Gastrocnemius medialis (tissue), 4 donors: ENCODE measurements at regions of chr11 and their contacts with region 1.

Region 1: GRCh38 chr11:72772978-72773690 is 20.7 kb downstream of the STARD10 start:
- DNase-seq: peak; percentile 59 to 78
- ATAC-seq: peak; percentile 96 to 98
- H3K4me3 ChIP-seq: no peak overlapping the region
- H3K27ac ChIP-seq: peak overlapping the region; percentile 66 to 80 (median 76)
- H3K4me1 ChIP-seq: peaks cover 24 to 26% of the 10 kb centered on the region in 2 donors
- H3K27me3 ChIP-seq: no peaks in the 10 kb centered on the region
- CTCF ChIP-seq: no peak
- POLR2A ChIP-seq: no peak

Region 2: DNA sequence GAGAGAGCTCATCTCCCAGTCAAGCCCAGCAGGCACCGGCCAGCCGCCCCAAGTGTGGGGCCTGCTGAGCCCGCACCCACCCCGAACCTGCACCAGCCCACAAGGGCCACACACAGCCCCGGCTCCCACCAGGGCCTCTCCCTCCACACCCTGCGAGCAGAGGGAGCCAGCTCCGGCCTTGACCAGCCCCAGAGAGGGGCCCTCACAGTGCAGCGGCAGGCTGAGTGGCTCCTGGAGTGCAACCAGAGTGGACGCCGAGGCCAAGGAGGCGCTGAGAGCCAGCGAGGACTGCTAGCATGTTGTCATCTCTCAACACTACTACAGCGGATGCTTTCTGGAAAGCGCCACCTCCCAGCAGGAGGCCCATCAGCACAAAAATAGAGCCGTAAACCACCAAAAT is 929.3 kb before region 1 on chr11:
- in situ Hi-C with region 1: no loop called
- intact Hi-C with region 1: no loop called
- DNase-seq: no peak
- ATAC-seq: no peak
- H3K4me3 ChIP-seq: no peak overlapping the region
- H3K27ac ChIP-seq: no peak overlapping the region
- H3K4me1 ChIP-seq: no peaks in the 10 kb centered on the region
- H3K27me3 ChIP-seq: no peaks in the 10 kb centered on the region
- CTCF ChIP-seq: no peak
- POLR2A ChIP-seq: no peak

Region 3: DNA sequence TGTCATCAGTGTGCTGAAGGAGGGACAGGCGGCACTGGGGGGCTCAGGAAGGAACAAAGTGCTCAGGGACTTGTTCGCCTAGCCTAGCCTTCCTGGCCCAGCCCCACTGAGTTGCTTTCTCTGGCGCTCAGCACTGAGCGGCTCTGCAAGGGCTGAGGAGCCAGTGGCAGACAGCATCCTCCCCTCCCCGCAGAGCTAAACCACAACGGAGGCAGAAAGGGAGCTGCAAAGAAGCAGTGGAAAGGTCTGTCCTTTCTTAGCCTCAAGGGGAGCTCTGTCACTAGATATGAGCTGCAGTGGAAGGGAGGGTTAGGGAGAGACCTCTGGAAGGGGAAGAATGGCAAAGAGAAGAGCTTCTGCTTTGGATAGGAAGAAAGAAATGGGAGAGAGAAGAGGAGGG is 439.5 kb before region 1 on chr11:
- in situ Hi-C with region 1: no loop called
- intact Hi-C with region 1: no loop called
- DNase-seq: no peak
- ATAC-seq: no peak
- H3K4me3 ChIP-seq: no peak overlapping the region
- H3K27ac ChIP-seq: no peak overlapping the region
- H3K4me1 ChIP-seq: peaks cover 20 to 21% of the 10 kb centered on the region in 2 donors
- H3K27me3 ChIP-seq: no peaks in the 10 kb centered on the region
- CTCF ChIP-seq: no peak
- POLR2A ChIP-seq: no peak

Region 4: GRCh38 chr11:72752088-72752914 is 20.8 kb before region 1 on chr11 and contains the start of gene ARAP1:
- in situ Hi-C with region 1: no loop called
- intact Hi-C with region 1: loop called (anchors 2 kb)
- DNase-seq: peak; percentile 46 to 66
- ATAC-seq: peak; percentile 86 to 87
- H3K4me3 ChIP-seq: peak within 1 kb of the TSS; percentile 64 to 78 (median 70)
- H3K27ac ChIP-seq: peak within 1 kb of the TSS; percentile 53 to 83 (median 76)
- H3K4me1 ChIP-seq: peaks cover 12 to 18% of the 10 kb centered on the region in 2 donors
- H3K27me3 ChIP-seq: no peaks in the 10 kb centered on the region
- CTCF ChIP-seq: no peak
- POLR2A ChIP-seq: peak in 1 of 2 donors; percentile 37
- total RNA-seq, gene ARAP1: 18.3 to 52.0 (median 26.0) TPM

Region 5: GRCh38 chr11:73012121-73012863 is 239.2 kb after region 1 on chr11:
- in situ Hi-C with region 1: no loop called
- intact Hi-C with region 1: no loop called
- DNase-seq: no peak
- ATAC-seq: no peak
- H3K4me3 ChIP-seq: no peak overlapping the region
- H3K27ac ChIP-seq: no peak overlapping the region
- H3K4me1 ChIP-seq: no peaks in the 10 kb centered on the region
- H3K27me3 ChIP-seq: no peaks in the 10 kb centered on the region
- CTCF ChIP-seq: no peak
- POLR2A ChIP-seq: no peak